ENCODE measurements at regions of chr1 and their contacts with region 1.

Region 1: GRCh38 chr1:226407497-226408284 is at the start of gene PARP1:
- DNase-seq: peak; percentile 93
- H3K4me3 Mint-ChIP-seq: peak within 1 kb of the TSS; percentile 100
- H3K27ac Mint-ChIP-seq: peak within 1 kb of the TSS; percentile 98
- H3K4me1 Mint-ChIP-seq: peaks cover 37% of the 10 kb centered on the region
- H3K27me3 Mint-ChIP-seq: no peaks in the 10 kb centered on the region
- total RNA-seq, gene PARP1: 301 to 308 TPM

Region 2: GRCh38 chr1:225467193-225468020 is 940.3 kb before region 1 on chr1:
- CTCF ChIA-PET with region 1: no interaction called
- POLR2A ChIA-PET with region 1: no interaction called
- intact Hi-C with region 1: loop called (anchors 10 kb)
- DNase-seq: peak; percentile 91
- H3K4me3 Mint-ChIP-seq: peak overlapping the region; percentile 92
- H3K27ac Mint-ChIP-seq: peak overlapping the region; percentile 99
- H3K4me1 Mint-ChIP-seq: peaks cover 26% of the 10 kb centered on the region
- H3K27me3 Mint-ChIP-seq: no peaks in the 10 kb centered on the region

Region 3: DNA sequence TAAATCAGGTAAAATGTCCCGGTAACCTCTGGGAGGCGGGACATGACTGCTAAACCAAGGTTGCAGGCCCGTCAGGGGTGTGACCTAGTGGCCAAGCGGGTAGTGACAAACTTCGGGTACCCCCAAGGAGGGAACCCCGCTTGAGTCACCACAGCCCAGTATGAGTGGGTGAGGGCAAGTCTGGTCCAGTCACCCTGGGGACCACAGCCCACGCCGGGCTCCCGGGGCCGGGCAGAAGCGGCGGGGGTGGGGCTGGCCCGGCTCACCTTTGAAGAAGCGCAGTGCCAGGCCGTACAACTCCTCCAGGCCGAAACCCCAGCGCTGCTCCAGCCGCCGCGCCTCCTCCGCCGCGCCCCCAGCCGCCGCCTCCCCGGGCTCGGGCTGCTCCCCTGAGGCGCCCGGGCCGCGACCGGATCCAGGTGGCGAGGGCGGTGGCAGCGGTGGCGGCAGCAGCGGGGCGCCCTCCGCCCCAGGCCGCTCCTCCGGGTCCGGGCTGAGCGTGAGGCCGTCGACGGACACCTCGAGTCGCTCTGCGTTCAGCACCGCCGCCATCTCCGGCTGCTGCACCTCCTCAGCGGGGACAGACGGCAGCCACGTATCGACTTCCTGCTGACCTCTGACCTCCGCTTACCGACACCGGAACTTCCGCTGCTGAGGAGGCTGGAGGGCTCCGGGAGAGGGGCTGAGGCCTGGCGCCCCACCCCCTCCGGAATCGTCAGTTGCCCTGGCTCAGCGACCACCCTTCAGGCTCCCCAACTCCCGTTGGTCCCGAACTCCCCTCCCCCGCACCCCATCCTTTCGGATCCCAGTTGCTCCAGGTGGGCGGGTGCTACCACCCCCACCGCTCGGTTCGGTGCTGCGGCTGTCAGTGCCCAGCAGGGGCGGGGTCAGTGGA is 221.3 kb before region 1 on chr1 and contains the start of gene ACBD3:
- CTCF ChIA-PET with region 1: no interaction called
- POLR2A ChIA-PET with region 1: interaction called, 3 read pairs
- intact Hi-C with region 1: loop called (anchors 10 kb)
- DNase-seq: peak; percentile 91
- H3K4me3 Mint-ChIP-seq: peak within 1 kb of the TSS; percentile 93
- H3K27ac Mint-ChIP-seq: peak within 1 kb of the TSS; percentile 91
- H3K4me1 Mint-ChIP-seq: peaks cover 34% of the 10 kb centered on the region
- H3K27me3 Mint-ChIP-seq: no peaks in the 10 kb centered on the region
- total RNA-seq, gene ACBD3: 18.7 to 20.7 TPM

Region 4: DNA sequence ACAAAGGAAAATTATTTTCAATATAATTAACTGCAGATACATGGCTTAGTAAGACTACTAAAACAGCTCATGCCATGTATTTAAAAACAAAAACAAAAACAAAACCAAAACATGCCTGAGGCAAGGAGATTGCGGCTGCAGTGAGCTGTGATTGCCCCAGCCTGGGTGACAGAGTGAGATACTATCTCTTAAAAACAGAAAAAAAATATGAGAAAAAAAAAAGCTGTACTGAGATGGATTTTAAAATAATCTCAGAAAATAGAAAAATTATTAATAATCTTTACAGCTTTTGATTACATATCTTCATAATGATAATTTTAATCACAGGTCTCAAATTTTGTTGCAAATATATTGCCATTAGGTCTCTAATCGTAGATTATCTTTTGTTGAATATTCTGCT is 74.7 kb before region 1 on chr1:
- CTCF ChIA-PET with region 1: interaction called, 6 read pairs
- POLR2A ChIA-PET with region 1: interaction called, 3 read pairs
- intact Hi-C with region 1: loop called (anchors 2 kb)
- DNase-seq: no peak
- H3K4me3 Mint-ChIP-seq: no peak overlapping the region
- H3K27ac Mint-ChIP-seq: no peak overlapping the region
- H3K4me1 Mint-ChIP-seq: peaks cover 15% of the 10 kb centered on the region
- H3K27me3 Mint-ChIP-seq: no peaks in the 10 kb centered on the region

Region 5: DNA sequence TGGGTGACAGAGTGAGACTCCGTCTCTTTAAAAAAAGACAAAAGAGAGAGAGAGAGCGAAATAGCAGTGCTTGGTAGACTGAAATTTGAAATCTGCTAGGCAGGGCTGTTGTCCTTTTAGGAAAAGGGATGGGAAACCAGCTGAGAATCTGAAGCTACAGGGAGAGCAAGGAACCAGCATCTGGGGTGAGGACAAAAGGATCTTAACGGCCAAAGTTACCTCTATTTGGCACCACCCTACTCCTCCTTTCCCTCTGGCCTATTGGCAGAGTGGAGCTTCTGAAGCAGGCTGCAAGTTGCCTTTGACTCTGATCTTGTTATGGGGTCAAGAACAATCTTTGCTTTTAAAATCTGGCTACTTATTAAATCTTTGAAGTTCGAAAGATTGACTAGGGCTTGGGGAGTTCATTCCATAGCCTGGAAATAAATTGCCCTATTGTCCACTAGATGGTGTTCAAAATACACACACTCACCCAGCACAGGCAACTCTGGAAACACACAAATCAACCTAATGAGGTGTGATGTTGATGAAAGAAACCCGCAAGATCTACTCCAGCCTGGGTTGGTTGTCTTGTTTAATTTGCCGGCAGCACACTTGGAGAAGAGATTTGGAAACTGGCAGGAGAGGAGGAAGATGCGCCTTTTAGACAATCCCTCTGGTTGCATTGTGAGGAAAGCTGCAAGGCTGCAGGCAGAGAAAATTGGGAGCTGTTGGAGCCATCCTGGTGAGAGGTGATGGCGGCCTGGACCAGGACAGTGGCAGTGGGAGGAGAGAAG is 16.7 kb after region 1 on chr1:
- CTCF ChIA-PET with region 1: interaction called, 15 read pairs
- POLR2A ChIA-PET with region 1: interaction called, 7 read pairs
- intact Hi-C with region 1: no loop called
- DNase-seq: no peak
- H3K4me3 Mint-ChIP-seq: no peak overlapping the region
- H3K27ac Mint-ChIP-seq: no peak overlapping the region
- H3K4me1 Mint-ChIP-seq: peaks cover 14% of the 10 kb centered on the region
- H3K27me3 Mint-ChIP-seq: no peaks in the 10 kb centered on the region

Region 6: DNA sequence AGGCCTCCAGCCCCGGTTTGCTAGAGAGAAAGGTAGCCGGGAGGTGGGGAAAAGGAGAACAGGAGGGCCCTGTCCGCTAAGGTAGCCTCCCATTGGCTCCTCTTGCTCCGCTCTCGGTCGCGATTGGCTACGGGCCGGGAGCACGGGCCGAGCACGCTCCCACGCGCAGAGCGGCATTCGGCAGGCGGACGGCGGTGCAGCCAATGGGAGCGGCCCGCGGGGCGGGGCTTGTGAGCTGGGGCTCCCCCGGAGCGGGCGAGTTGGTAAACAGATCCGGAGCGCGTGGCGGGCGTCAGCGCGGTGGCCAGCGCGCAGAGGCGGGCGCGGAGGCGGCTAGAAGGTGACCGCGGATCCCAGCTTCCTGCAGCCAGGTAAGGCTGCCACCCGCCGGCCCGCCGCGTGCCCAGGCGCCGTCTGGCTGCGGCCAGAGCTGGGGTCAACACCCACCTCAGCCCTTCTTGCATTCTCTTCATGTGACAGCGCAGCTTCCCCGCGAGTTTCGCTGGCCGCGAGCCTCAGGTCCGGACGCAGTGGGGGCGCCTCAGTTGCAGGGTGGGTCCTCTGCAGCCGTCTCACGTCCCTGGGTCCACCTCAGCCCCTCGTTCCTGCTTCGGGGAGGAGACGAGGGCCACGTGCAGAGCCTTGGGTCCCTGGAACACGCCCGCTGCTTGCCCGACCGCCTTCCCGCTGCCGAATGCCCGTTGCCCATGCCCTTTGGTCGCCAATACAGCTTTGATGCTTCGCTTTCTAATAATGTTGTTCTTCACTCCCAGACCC is 532.5 kb after region 1 on chr1 and contains the start of gene COQ8A:
- CTCF ChIA-PET with region 1: interaction called, 3 read pairs
- POLR2A ChIA-PET with region 1: interaction called, 5 read pairs
- intact Hi-C with region 1: loop called (anchors 5 kb)
- DNase-seq: peak; percentile 99
- H3K4me3 Mint-ChIP-seq: peak within 1 kb of the TSS; percentile 82
- H3K27ac Mint-ChIP-seq: peak within 1 kb of the TSS; percentile 94
- H3K4me1 Mint-ChIP-seq: peaks cover 41% of the 10 kb centered on the region
- H3K27me3 Mint-ChIP-seq: no peaks in the 10 kb centered on the region
- total RNA-seq, gene COQ8A: 19.8 to 22.2 TPM